HCT116 (cell line): ENCODE measurements at regions of chr7 and their contacts with region 1.

Region 1: GRCh38 chr7:104862719-104863118 is 151.3 kb upstream of the KMT2E start:
- DNase-seq: peak; percentile 38
- ATAC-seq: peak; percentile 98
- H3K4me3 ChIP-seq: no peak overlapping the region
- H3K27ac ChIP-seq: no peak overlapping the region
- H3K4me1 ChIP-seq: no peaks in the 10 kb centered on the region
- H3K27me3 ChIP-seq: peaks cover 45% of the 10 kb centered on the region
- CTCF ChIP-seq: peak; percentile 37 to 76 (median 62); a peak in 4 of 6 replicates
- POLR2A ChIP-seq: no peak
- RAD21 ChIP-seq: peak; percentile 49

Region 2: GRCh38 chr7:103573479-103574058 is 1289.2 kb before region 1 on chr7:
- CTCF ChIA-PET with region 1: no interaction called
- POLR2A ChIA-PET with region 1: no interaction called
- RAD21 ChIA-PET with region 1: no interaction called
- intact Hi-C with region 1: loop called (anchors 10 kb)
- DNase-seq: peak; percentile 18
- ATAC-seq: no peak
- H3K4me3 ChIP-seq: no peak overlapping the region
- H3K27ac ChIP-seq: no peak overlapping the region
- H3K4me1 ChIP-seq: no peaks in the 10 kb centered on the region
- H3K27me3 ChIP-seq: peaks cover 59% of the 10 kb centered on the region
- CTCF ChIP-seq: peak; percentile 30 to 71 (median 46); a peak in 4 of 6 replicates
- POLR2A ChIP-seq: no peak
- RAD21 ChIP-seq: peak; percentile 61

Region 3: GRCh38 chr7:104231054-104232046 is 631.4 kb before region 1 on chr7:
- CTCF ChIA-PET with region 1: interaction called, 36 read pairs
- POLR2A ChIA-PET with region 1: no interaction called
- RAD21 ChIA-PET with region 1: interaction called, 3 to 5 read pairs
- intact Hi-C with region 1: no loop called
- DNase-seq: peak; percentile 36
- ATAC-seq: peak; percentile 98
- H3K4me3 ChIP-seq: no peak overlapping the region
- H3K27ac ChIP-seq: no peak overlapping the region
- H3K4me1 ChIP-seq: no peaks in the 10 kb centered on the region
- H3K27me3 ChIP-seq: peaks cover 12% of the 10 kb centered on the region; the same call in 1 of the 2 replicates
- CTCF ChIP-seq: peak; percentile 54 to 87 (median 85)
- POLR2A ChIP-seq: no peak
- RAD21 ChIP-seq: peak; percentile 79

Region 4: DNA sequence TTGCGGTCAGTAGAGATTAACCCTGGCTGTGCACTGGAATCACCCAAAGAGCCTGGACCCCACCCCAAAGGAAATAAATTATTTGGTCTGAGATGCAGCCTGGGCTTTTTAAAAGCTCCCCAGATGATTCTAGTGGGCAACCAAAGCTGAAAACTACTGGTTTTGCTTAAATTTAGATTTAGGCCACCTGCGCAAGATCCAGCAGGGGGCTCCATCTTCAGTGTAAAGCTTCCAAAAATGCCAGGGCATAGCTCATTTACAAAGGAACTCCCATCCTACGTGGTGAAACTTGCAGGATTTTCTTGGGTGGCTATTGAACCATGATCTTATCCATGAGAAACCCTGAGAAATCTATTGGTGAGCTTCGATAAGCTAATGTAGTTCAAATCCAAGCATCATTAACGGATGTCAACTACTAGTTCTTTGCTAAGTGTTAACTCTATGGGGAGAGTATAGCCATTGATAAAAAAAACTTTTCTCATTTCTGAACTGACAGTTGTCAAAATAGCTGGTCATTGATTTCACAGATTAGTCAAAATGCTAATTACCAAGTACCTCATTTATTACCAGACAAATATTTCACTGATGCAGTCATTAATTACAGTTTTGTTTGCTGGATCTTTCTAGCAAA is 219.0 kb before region 1 on chr7:
- CTCF ChIA-PET with region 1: interaction called, 16 read pairs
- POLR2A ChIA-PET with region 1: no interaction called
- RAD21 ChIA-PET with region 1: interaction called in 1 of 2 experiments, 3 read pairs
- intact Hi-C with region 1: no loop called
- DNase-seq: peak; percentile 15
- ATAC-seq: peak; percentile 67
- H3K4me3 ChIP-seq: no peak overlapping the region
- H3K27ac ChIP-seq: no peak overlapping the region
- H3K4me1 ChIP-seq: no peaks in the 10 kb centered on the region
- H3K27me3 ChIP-seq: peaks cover 53% of the 10 kb centered on the region
- CTCF ChIP-seq: peak; percentile 49 to 77 (median 77); a peak in 5 of 6 replicates
- POLR2A ChIP-seq: no peak
- RAD21 ChIP-seq: peak; percentile 54

Region 5: GRCh38 chr7:104653825-104654402 is 208.8 kb before region 1 on chr7:
- CTCF ChIA-PET with region 1: no interaction called
- POLR2A ChIA-PET with region 1: no interaction called
- RAD21 ChIA-PET with region 1: no interaction called
- intact Hi-C with region 1: no loop called
- DNase-seq: no peak
- ATAC-seq: no peak
- H3K4me3 ChIP-seq: no peak overlapping the region
- H3K27ac ChIP-seq: no peak overlapping the region
- H3K4me1 ChIP-seq: no peaks in the 10 kb centered on the region
- H3K27me3 ChIP-seq: peaks cover 31% of the 10 kb centered on the region; the same call in 1 of the 2 replicates
- CTCF ChIP-seq: no peak
- POLR2A ChIP-seq: no peak
- RAD21 ChIP-seq: no peak

Region 6: GRCh38 chr7:104883718-104884452 is 21.2 kb after region 1 on chr7:
- CTCF ChIA-PET with region 1: interaction called, 14 read pairs
- POLR2A ChIA-PET with region 1: no interaction called
- RAD21 ChIA-PET with region 1: no interaction called
- intact Hi-C with region 1: no loop called
- DNase-seq: peak; percentile 84
- ATAC-seq: peak; percentile 99
- H3K4me3 ChIP-seq: no peak overlapping the region
- H3K27ac ChIP-seq: no peak overlapping the region
- H3K4me1 ChIP-seq: peaks cover 3 to 11% of the 10 kb centered on the region in 2 experiments; a peak in 3 of 4 replicates
- H3K27me3 ChIP-seq: no peaks in the 10 kb centered on the region
- CTCF ChIP-seq: peak; percentile 79 to 97 (median 96)
- POLR2A ChIP-seq: no peak
- RAD21 ChIP-seq: peak; percentile 76